IMR-90 (cell line): ENCODE measurements at regions of chr9 and their contacts with region 1.

Region 1: GRCh38 chr9:35510745-35511428 is 21.0 kb downstream of the RUSC2 start:
- DNase-seq: peak; percentile 96
- ATAC-seq: peak; percentile 95
- H3K4me3 ChIP-seq: no peak overlapping the region
- H3K27ac ChIP-seq: peak overlapping the region; percentile 89
- H3K4me1 ChIP-seq: peaks cover 13% of the 10 kb centered on the region; the same call in 1 of the 2 replicates
- H3K27me3 ChIP-seq: no peaks in the 10 kb centered on the region
- CTCF ChIP-seq: peak; percentile 40
- POLR2A ChIP-seq: no peak
- RAD21 ChIP-seq: peak; percentile 35

Region 2: GRCh38 chr9:35489313-35490154 is 21.4 kb before region 1 on chr9 and contains the start of gene RUSC2:
- CTCF ChIA-PET with region 1: no interaction called
- POLR2A ChIA-PET with region 1: no interaction called
- dilution Hi-C with region 1: no loop called
- in situ Hi-C with region 1: no loop called
- intact Hi-C with region 1: loop called (anchors 2 kb)
- DNase-seq: peak; percentile 90
- ATAC-seq: peak; percentile 85
- H3K4me3 ChIP-seq: peak within 1 kb of the TSS; percentile 89
- H3K27ac ChIP-seq: peak within 1 kb of the TSS; percentile 96
- H3K4me1 ChIP-seq: peaks cover 3% of the 10 kb centered on the region
- H3K27me3 ChIP-seq: no peaks in the 10 kb centered on the region
- CTCF ChIP-seq: peak; percentile 41
- POLR2A ChIP-seq: peak; percentile 68
- RAD21 ChIP-seq: peak; percentile 52
- total RNA-seq, gene RUSC2: 17.4 and 18.3 TPM in 2 replicates